ENCODE measurements at regions of chr3 and their contacts with region 1.

Region 1: GRCh38 chr3:16998236-16998923 is 113.6 kb downstream of the PLCL2 start:
- DNase-seq: no peak
- ATAC-seq: no peak
- H3K4me3 ChIP-seq: no peak overlapping the region
- H3K4me3 Mint-ChIP-seq: peak overlapping the region in 2 of 10 donors; percentile 40 to 45
- H3K27ac ChIP-seq: no peak overlapping the region
- H3K27ac Mint-ChIP-seq: peak overlapping the region in 2 of 9 donors; percentile 2 to 33
- H3K4me1 ChIP-seq: peaks cover 16 to 19% of the 10 kb centered on the region in 2 donors
- H3K4me1 Mint-ChIP-seq: peaks cover 36 to 94% (median 88%) of the 10 kb centered on the region in 7 donors
- H3K27me3 ChIP-seq: no peaks in the 10 kb centered on the region
- H3K27me3 Mint-ChIP-seq: no peaks in the 10 kb centered on the region

Region 2: DNA sequence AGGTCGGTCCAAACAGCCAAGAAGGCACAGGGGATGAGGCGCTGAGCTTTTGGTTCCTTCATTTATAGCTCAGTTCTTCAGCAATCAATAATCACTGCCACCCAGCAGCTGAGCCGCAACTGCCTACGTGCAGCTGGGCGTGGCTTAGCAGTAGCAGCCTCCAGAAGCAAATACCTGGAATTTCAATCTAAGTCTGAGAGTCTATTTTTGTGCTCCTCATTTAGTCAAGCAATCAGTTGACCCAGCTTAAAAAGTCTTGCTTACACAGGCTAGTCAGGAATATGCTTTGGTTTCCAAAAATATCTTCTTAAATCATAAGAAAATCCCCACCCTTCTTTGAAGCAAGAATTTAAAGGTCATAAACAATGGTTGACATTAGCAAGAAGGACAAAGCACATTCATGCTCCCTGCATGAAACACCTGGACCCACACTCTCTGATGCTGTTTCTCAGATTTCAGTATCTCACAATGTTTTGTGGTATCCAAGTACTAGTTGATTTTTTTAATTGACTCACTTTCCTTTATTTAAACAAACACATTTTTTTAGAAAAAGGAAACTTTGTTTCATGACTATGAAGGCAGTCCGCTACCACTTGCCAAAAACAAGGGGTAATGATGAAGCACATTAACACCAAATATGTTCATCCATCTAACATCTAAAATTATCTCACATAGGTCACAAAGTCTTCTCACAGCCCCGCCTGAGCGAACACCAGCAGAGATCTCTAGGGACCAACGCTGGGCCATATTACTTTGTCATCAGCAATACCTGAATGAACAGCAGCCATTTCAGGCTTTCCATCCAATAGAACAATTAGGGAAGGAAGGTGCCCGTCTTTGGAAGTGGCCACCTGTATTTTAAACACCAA is 627.3 kb before region 1 on chr3:
- CTCF ChIA-PET with region 1: no interaction called
- POLR2A ChIA-PET with region 1: no interaction called
- intact Hi-C with region 1: no loop called
- DNase-seq: no peak
- ATAC-seq: no peak
- H3K4me3 ChIP-seq: no peak overlapping the region
- H3K4me3 Mint-ChIP-seq: peak overlapping the region in 6 of 10 donors; percentile 4 to 49 (median 20)
- H3K27ac ChIP-seq: no peak overlapping the region
- H3K27ac Mint-ChIP-seq: peak overlapping the region; percentile 34 to 91 (median 82)
- H3K4me1 ChIP-seq: peaks cover 0 to 33% of the 10 kb centered on the region in 2 donors
- H3K4me1 Mint-ChIP-seq: peaks cover 33 to 86% (median 80%) of the 10 kb centered on the region in 7 donors
- H3K27me3 ChIP-seq: no peaks in the 10 kb centered on the region
- H3K27me3 Mint-ChIP-seq: no peaks in the 10 kb centered on the region

Region 3: GRCh38 chr3:16548721-16549120 is 449.7 kb before region 1 on chr3:
- CTCF ChIA-PET with region 1: no interaction called
- POLR2A ChIA-PET with region 1: no interaction called
- intact Hi-C with region 1: no loop called
- DNase-seq: no peak
- ATAC-seq: no peak
- H3K4me3 ChIP-seq: no peak overlapping the region
- H3K4me3 Mint-ChIP-seq: no peak overlapping the region
- H3K27ac ChIP-seq: no peak overlapping the region
- H3K27ac Mint-ChIP-seq: peak overlapping the region in 1 of 9 donors; percentile 25
- H3K4me1 ChIP-seq: peaks cover 0 to 4% of the 10 kb centered on the region in 2 donors
- H3K4me1 Mint-ChIP-seq: peaks cover 6 to 29% (median 7%) of the 10 kb centered on the region in 7 donors
- H3K27me3 ChIP-seq: no peaks in the 10 kb centered on the region
- H3K27me3 Mint-ChIP-seq: peaks cover 0 to 9% (median 7%) of the 10 kb centered on the region in 5 donors

Region 4: DNA sequence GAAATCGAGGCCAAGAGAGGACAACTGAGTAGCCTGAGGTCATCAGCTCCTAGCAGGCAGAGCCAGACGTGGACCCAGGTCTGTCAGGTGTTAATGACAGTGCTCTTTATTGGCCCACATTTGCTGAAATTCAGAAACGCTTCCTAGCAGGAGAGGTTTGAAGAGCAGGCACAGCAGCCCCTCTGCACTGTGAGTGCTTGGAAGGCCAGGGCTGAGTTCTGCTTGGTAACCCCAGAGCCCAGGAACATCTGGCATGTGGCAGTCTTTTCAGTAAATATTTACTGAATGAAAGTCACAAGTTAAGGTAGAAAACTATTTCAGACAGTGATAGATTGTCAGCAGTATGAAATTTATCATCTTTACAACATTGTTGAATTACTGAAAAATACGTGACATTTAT is 11.2 kb before region 1 on chr3:
- CTCF ChIA-PET with region 1: no interaction called
- POLR2A ChIA-PET with region 1: no interaction called
- intact Hi-C with region 1: loop called in 1 of 2 experiments (anchors 1 kb)
- DNase-seq: no peak
- ATAC-seq: no peak
- H3K4me3 ChIP-seq: no peak overlapping the region
- H3K4me3 Mint-ChIP-seq: peak overlapping the region in 2 of 10 donors; percentile 12 to 27
- H3K27ac ChIP-seq: no peak overlapping the region
- H3K27ac Mint-ChIP-seq: peak overlapping the region in 2 of 9 donors; percentile 38 to 70
- H3K4me1 ChIP-seq: peaks cover 15 to 19% of the 10 kb centered on the region in 2 donors
- H3K4me1 Mint-ChIP-seq: peaks cover 5 to 95% (median 83%) of the 10 kb centered on the region in 7 donors
- H3K27me3 ChIP-seq: no peaks in the 10 kb centered on the region
- H3K27me3 Mint-ChIP-seq: no peaks in the 10 kb centered on the region